Activated T-helper 2 cell treated with anti-CD3 and anti-CD28 coated beads, Interferon-gamma antibody, Interleukin-2, Interleukin-4, amounts not matched to agents 10 μg/mL and 5 μg/mL and 100 μg/mL, durations not matched to agents 14 hours and 24 hours and 36 hours (primary cell): ENCODE measurements at regions of chr11 and their contacts with region 1.

Region 1: DNA sequence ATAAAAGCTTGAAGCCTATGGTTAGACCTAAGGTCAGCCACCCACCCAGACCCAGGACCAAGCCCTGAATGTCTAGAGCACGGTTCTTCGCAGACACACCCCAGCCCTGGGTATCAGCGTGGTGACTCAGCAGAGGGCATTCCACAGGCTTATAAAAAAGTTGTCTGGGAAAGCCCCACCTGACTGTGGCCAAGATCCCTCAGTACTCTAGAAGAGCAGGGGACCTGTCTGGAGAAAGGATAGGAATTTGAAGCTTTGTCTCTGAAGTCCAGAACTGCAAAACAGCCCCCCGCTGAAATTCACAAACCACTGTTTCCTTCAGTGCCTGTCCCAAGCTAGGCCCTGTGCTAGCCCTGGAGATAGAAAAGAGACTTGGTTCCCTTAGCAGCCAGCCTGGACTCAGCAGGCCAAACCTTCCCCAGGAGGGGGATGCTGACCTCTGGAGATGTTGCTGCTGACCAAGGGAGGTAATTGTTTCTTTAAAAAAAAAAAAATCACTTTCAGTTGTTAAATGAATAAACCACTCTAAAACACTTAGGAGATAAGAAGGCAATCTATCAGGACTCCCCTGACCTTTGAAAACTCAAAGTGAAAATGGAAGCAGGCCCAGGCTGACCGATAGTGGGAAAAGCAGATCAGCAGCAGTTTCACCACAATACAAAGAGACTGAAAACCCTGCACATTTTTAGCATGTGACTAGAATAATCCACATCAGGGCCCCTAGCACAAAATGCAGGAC is 113.9 kb downstream of the ABTB2 start:
- DNase-seq: peak; percentile 52
- H3K4me3 Mint-ChIP-seq: peak overlapping the region; percentile 45
- H3K27ac Mint-ChIP-seq: peak overlapping the region; percentile 83
- H3K4me1 Mint-ChIP-seq: peaks cover 87% of the 10 kb centered on the region
- H3K27me3 Mint-ChIP-seq: no peaks in the 10 kb centered on the region

Region 2: DNA sequence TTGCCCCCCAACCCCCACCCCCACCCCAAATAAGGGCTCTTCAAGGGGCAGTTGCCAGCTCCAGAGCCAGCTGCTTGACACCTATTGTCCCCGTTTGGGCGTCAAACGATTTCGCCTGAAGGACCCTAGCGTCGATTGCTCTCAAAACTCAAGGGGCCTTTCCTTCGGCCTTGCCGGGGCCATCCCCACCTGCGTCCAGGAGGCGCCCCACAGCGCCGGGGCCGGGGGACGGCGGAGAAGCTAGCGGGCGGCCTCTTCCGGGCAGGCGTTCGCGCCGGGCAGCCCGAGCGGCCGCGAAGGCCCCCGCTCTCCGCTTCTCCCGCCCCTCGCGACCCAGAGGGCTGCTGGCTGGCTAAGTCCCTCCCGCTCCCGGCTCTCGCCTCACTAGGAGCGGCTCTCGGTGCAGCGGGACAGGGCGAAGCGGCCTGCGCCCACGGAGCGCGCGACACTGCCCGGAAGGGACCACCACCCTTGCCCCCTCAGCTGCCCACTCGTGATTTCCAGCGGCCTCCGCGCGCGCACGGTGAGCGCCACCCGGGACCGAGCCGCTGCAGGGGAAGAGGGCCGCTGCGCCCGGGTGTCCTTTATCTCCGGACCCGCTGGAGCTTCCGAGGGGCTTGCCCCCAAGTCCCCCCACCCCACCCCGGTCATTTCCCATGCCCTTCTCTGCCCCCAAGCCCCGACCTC is 192.4 kb before region 1 on chr11 and contains the start of gene CAPRIN1:
- intact Hi-C with region 1: loop called (anchors 5 kb)
- DNase-seq: peak; percentile 83
- H3K4me3 Mint-ChIP-seq: peak within 1 kb of the TSS; percentile 93
- H3K27ac Mint-ChIP-seq: peak within 1 kb of the TSS; percentile 96
- H3K4me1 Mint-ChIP-seq: peaks cover 17% of the 10 kb centered on the region
- H3K27me3 Mint-ChIP-seq: peaks cover 5% of the 10 kb centered on the region
- total RNA-seq, gene CAPRIN1: 285 and 286 TPM in 2 replicates

Region 3: DNA sequence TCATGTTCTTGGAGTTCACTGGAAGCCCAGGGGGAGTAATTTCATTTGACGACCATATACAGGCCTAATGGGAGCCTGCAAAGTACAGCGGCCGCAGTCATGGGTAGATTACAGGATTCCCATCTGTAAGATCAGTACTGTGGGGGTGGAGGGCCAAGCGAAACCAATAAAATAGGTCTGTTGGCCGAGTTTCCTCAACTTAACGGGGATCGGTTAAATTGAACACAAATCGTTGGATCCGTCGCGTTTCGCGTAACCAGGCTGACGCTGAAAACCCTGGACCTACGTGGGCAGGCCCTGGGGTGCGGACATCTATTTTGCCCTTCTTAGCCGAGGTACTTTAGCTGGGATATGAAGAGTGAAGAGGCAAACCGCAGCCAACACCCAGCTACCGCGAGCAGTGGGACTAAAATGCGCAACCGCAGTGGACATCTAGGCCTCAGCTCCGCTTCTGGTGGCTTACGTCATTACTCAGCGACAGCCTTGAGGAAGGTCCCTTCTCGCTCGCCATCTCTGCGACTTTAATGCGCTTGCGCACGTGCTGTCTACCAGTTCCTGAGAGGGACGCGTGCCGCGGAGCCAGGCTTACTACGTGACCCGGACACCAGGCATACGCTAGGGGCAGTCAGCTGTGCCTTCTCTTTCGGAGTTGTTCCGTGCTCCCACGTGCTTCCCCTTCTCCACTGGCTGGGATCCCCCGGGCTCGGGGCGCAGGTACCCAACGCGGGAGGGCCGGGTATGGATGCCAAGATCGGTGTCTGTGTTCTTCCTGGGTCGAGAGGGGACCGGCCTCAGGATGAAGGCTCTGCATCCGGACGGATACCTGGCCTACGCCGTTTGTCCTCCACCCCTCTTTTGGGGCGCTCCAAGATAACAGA is 138.6 kb before region 1 on chr11 and contains the start of gene NAT10:
- intact Hi-C with region 1: loop called (anchors 2 kb)
- DNase-seq: peak; percentile 97
- H3K4me3 Mint-ChIP-seq: peak within 1 kb of the TSS; percentile 95
- H3K27ac Mint-ChIP-seq: peak within 1 kb of the TSS; percentile 94
- H3K4me1 Mint-ChIP-seq: peaks cover 33% of the 10 kb centered on the region
- H3K27me3 Mint-ChIP-seq: no peaks in the 10 kb centered on the region
- total RNA-seq, gene NAT10: 124 and 125 TPM in 2 replicates

Region 4: DNA sequence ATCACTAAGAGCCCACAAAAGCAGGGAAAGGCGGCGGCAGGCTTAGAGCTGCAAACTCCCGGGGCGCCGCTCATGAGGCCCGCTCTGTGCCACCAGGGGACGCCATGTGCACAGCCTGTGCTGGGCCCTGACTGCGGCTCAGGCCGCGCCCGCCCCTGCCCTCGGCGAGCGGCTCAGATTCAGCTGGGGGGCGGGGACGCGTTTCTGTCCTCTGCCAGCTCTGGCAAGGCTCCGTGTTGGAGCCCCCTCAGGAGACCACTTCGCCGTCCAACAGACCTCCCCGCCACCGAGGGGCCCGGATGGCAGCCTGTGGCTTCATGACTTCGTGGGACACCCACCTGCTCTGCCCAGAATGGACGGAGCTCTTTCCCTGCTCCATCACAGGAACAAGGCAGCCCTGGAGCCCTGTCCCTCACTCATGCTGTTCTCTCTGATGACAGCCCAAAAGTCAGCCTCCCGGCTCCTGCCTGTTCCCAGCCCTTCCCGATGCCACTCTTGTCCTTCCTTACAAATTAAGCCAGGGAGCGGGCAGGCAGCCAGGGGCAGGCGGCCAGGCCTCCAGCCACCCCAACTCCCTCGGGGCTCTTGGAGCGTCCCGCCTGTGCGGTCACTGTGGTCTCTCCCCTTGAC is 69.4 kb before region 1 on chr11:
- intact Hi-C with region 1: loop called (anchors 2 kb)
- DNase-seq: peak; percentile 72
- H3K4me3 Mint-ChIP-seq: peak overlapping the region; percentile 62
- H3K27ac Mint-ChIP-seq: peak overlapping the region; percentile 49
- H3K4me1 Mint-ChIP-seq: peaks cover 46% of the 10 kb centered on the region
- H3K27me3 Mint-ChIP-seq: no peaks in the 10 kb centered on the region

Region 5: GRCh38 chr11:34214961-34215805 is 28.7 kb before region 1 on chr11:
- intact Hi-C with region 1: loop called (anchors 1 kb)
- DNase-seq: no peak
- H3K4me3 Mint-ChIP-seq: peak overlapping the region; percentile 6
- H3K27ac Mint-ChIP-seq: peak overlapping the region; percentile 84
- H3K4me1 Mint-ChIP-seq: peaks cover 27% of the 10 kb centered on the region
- H3K27me3 Mint-ChIP-seq: no peaks in the 10 kb centered on the region

Region 6: GRCh38 chr11:34266090-34266912 is 22.4 kb after region 1 on chr11:
- intact Hi-C with region 1: loop called (anchors 2 kb)
- DNase-seq: no peak
- H3K4me3 Mint-ChIP-seq: no peak overlapping the region
- H3K27ac Mint-ChIP-seq: peak overlapping the region; percentile 10
- H3K4me1 Mint-ChIP-seq: peaks cover 32% of the 10 kb centered on the region
- H3K27me3 Mint-ChIP-seq: no peaks in the 10 kb centered on the region

Region 7: GRCh38 chr11:34366522-34366921 is 122.6 kb after region 1 on chr11:
- intact Hi-C with region 1: no loop called
- DNase-seq: no peak
- H3K4me3 Mint-ChIP-seq: no peak overlapping the region
- H3K27ac Mint-ChIP-seq: no peak overlapping the region
- H3K4me1 Mint-ChIP-seq: peaks cover 12% of the 10 kb centered on the region
- H3K27me3 Mint-ChIP-seq: peaks cover 22% of the 10 kb centered on the region

Region 8: DNA sequence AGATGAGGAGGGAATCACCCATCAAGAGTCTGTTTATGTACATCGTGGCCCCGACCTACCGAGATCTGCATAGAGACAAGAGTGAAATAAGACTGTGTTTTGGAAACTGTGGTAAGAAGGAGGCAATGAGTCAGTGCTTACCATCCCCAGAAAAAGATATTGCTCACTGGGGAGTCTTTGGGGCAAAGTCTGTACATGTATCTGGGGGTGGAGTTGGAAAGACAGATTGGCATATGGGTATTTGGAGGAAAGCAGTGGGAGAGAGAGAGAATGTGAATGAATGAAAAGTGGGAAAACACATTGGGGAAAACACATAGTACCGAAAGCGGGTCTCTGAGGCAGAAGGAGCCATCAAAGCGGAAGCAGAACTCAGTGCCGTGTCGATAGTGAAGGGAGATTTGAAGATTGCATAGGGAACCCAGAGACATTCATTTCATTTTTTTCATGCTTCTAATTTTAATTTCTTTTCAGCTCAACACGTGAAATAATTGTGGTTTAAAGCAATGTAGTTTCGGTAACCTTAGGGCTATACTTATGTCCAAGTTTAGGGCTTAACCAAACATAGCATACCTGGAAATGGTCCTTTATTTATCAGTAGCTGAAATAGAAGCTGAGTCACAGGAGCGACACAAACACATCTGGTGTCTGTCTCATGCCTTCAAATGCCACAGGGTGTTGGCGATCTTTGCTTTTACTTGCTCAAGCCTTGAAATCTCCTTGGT is 796.5 kb after region 1 on chr11:
- intact Hi-C with region 1: loop called (anchors 10 kb)
- DNase-seq: peak; percentile 69
- H3K4me3 Mint-ChIP-seq: peak overlapping the region; percentile 73
- H3K27ac Mint-ChIP-seq: peak overlapping the region; percentile 91
- H3K4me1 Mint-ChIP-seq: peaks cover 58% of the 10 kb centered on the region
- H3K27me3 Mint-ChIP-seq: peaks cover 20% of the 10 kb centered on the region